CD4-positive, alpha-beta memory T cell (primary cell): ENCODE measurements at regions of chr7 and their contacts with region 1.

Region 1: DNA sequence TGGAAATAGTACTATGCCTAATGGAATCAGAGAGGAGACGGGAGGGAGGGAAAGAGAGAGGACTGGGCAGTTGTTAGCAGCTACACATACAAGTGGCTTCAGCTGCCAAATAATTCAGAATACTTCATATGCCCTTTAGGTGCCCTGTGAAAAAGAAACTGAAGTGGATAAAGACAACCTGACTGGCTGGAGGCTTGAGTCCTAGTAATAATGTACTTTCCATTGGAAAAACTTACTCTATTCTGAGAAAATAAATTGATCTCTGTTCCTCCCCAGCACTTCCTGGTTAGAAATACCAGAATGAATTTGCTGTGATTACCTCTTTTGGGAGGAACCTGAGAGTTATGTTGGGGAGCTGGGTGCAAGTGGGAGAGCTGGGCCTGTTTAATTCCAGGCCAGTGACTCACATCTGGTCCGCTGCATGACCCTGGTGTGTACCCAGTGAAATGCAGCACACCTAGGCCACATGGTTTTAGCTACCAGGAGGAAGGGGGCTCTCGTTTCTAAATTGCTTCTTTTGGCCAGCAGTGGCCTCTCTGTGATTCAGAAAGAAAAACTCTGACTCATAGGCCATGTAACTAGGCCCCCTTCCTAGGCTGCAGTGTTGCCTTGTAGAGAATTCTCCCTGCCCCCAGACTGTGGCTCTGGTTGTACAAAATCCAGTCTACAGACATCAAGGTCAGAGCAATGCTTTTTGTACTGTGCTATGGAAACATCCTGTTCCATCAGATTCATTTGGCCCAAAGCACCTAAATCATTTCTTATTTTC is 6.5 kb downstream of the AGFG2 start:
- DNase-seq: peak in 1 of 5 donors; percentile 84
- H3K4me3 ChIP-seq: peak overlapping the region; percentile 25 to 29
- H3K4me3 Mint-ChIP-seq: peak overlapping the region; percentile 69 to 97 (median 88)
- H3K27ac ChIP-seq: peak overlapping the region; percentile 66
- H3K27ac Mint-ChIP-seq: peak overlapping the region; percentile 61 to 98 (median 91)
- H3K4me1 ChIP-seq: peaks cover 99% of the 10 kb centered on the region
- H3K4me1 Mint-ChIP-seq: peaks cover 76 to 100% (median 89%) of the 10 kb centered on the region in 4 donors
- H3K27me3 ChIP-seq: no peaks in the 10 kb centered on the region
- H3K27me3 Mint-ChIP-seq: no peaks in the 10 kb centered on the region

Region 2: DNA sequence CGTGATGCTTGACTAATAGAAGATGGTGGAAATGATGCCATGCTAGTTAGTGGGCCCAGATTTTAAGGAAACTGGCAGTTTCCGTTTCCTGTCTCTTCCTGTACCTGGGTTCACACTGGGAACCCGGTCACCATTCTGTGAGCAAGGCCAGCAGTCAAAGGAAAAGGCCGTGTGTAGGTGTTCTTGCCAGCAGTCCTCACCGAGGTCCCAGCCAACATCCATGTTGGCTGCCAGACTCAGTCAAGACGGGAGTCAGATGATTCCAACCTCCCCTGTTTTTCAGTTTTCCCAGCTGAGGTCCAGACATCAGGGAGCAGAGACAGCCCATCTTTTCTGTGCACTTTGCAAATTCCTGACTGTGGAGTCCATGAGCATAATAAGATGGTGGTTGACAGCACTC is 202.8 kb before region 1 on chr7:
- CTCF ChIA-PET with region 1: no interaction called
- POLR2A ChIA-PET with region 1: no interaction called
- intact Hi-C with region 1: no loop called
- DNase-seq: no peak
- H3K4me3 ChIP-seq: no peak overlapping the region
- H3K4me3 Mint-ChIP-seq: peak overlapping the region in 1 of 8 donors; percentile 43
- H3K27ac ChIP-seq: no peak overlapping the region
- H3K27ac Mint-ChIP-seq: peak overlapping the region; percentile 83 to 92 (median 87)
- H3K4me1 ChIP-seq: peaks cover 21% of the 10 kb centered on the region
- H3K4me1 Mint-ChIP-seq: peaks cover 14 to 34% (median 19%) of the 10 kb centered on the region in 4 donors
- H3K27me3 ChIP-seq: no peaks in the 10 kb centered on the region
- H3K27me3 Mint-ChIP-seq: no peaks in the 10 kb centered on the region

Region 3: DNA sequence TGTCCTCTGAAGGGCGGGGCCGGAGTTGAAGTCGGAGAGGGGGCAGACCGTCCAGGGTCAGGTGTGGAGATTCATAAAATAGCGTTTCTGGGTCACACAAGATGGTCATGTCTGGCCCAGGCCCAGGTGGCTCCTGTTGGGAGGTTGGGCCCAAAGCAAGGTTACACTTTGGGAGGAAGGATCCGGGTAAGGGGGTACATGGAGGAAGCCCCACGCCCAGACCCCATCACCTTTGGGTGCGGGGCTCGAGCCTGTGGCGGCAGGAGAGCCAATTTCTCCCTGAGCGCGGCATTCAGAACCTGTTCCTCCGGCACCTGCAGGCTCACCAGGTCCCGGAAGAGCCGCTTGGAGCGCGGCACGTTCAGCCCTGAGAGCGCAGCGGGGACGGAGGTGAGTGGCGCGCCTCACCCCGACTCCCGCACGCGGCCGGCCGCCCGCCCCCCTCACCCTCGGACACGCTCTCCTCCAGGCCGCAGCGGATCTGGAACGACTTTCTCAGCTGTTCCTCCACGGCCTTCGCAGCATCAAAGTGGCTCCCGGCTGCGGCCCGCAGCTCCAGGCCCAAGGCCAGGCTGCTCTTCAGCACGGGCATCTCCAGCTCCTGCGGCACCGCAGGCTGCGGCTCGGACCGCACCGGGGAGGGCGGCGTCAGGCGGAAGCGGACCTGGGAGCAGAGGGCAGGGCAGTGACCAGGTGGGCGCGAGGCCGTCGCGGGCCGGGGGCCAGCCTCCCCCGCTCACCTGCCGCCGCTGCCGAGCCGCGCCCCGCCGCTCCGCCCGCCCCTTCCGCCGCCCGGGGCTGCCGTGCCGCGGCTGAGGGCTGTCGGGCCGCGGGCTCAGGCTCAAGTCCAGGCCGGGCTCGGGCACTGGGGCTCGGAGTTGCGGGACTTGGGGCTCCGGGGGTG is 109.9 kb before region 1 on chr7:
- CTCF ChIA-PET with region 1: interaction called, 3 read pairs
- POLR2A ChIA-PET with region 1: interaction called, 22 read pairs
- intact Hi-C with region 1: no loop called
- DNase-seq: peak; percentile 46 to 58 (median 53)
- H3K4me3 ChIP-seq: peak overlapping the region; percentile 78 to 95
- H3K4me3 Mint-ChIP-seq: peak overlapping the region; percentile 85 to 95 (median 92)
- H3K27ac ChIP-seq: peak overlapping the region; percentile 92
- H3K27ac Mint-ChIP-seq: peak overlapping the region; percentile 81 to 99 (median 94)
- H3K4me1 ChIP-seq: peaks cover 49% of the 10 kb centered on the region
- H3K4me1 Mint-ChIP-seq: peaks cover 24 to 55% (median 40%) of the 10 kb centered on the region in 4 donors
- H3K27me3 ChIP-seq: no peaks in the 10 kb centered on the region
- H3K27me3 Mint-ChIP-seq: no peaks in the 10 kb centered on the region

Region 4: DNA sequence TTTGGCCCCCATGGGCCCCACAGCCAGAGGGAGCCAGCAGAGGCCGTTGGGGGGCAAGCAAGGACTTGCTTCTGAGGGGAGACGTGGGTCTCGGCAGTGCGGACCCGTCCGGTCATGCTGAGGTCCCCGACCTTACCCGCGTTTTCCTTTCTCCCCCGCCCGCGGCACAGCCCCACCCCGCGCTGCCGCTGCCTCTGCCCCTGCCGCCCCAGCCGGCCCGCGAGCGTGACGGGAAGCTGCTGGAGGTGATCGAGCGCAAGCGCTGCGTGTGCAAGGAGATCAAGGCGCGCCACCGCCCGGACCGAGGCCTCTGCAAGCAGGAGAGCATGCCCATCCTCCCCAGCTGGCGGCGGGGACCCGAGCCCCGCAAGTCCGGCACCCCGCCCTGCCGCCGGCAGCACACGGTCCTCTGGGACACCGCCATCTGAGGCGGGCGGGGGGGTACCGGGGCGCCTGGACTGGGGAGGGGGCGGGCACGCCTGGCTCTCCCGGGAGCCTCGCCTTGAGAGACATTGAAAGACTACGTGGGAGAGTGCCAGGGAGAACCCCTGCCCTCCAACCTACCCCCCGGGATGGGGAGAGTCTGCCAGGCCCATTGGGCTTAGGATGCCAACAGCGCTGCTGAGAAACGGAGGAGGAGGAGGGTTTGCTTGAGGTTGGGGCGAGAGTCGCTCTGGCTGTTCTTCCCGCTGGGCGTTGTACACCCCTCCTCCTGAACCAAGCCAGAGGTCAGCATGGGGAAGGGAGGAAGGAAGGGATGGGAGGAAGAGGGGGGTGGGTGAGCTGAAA is 51.9 kb before region 1 on chr7:
- CTCF ChIA-PET with region 1: interaction called, 14 read pairs
- POLR2A ChIA-PET with region 1: interaction called, 9 read pairs
- intact Hi-C with region 1: no loop called
- DNase-seq: peak; percentile 48 to 60 (median 54)
- H3K4me3 ChIP-seq: no peak overlapping the region
- H3K4me3 Mint-ChIP-seq: peak overlapping the region; percentile 71 to 84 (median 75)
- H3K27ac ChIP-seq: no peak overlapping the region
- H3K27ac Mint-ChIP-seq: peak overlapping the region in 3 of 7 donors; percentile 32 to 86 (median 84)
- H3K4me1 ChIP-seq: peaks cover 10% of the 10 kb centered on the region
- H3K4me1 Mint-ChIP-seq: peaks cover 3 to 29% (median 15%) of the 10 kb centered on the region in 4 donors
- H3K27me3 ChIP-seq: no peaks in the 10 kb centered on the region
- H3K27me3 Mint-ChIP-seq: peaks cover 0 to 2% of the 10 kb centered on the region in 2 donors

Region 5: DNA sequence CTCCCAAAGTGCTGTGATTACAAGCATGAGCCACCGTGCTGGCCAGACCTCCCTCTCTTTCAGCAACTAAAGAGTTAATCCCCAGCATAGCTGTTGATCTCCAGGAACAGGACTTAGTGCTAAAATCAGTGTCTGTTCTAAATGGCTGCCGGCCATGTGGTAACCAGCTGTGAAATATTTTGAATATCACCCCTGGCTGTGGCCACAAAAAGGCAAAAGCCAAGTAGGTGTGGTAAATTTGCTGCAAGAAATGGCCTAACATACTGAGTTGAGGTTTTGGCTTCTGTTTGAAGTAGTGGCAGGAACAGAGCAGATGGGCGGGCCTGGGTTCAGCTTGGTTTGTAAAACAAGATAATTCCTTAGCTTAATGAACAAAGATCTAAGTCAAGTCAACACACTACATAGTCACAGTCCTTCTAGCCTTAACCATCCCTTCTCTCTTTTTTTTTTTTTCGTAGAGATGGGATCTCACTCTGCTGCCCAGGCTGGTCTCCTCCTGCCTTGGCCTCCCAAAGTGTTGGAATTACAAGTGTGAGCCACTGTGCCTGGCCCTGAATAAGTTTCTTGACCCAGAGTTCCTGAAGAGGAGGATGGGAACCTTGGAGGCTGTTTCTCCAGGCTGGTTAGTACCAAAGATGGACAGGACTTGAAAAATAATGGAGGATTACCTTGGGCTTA is 29.3 kb before region 1 on chr7:
- CTCF ChIA-PET with region 1: interaction called, 14 read pairs
- POLR2A ChIA-PET with region 1: interaction called, 26 read pairs
- intact Hi-C with region 1: no loop called
- DNase-seq: peak; percentile 74 to 82 (median 80)
- H3K4me3 ChIP-seq: peak overlapping the region in 1 of 2 donors; percentile 33
- H3K4me3 Mint-ChIP-seq: peak overlapping the region; percentile 61 to 83 (median 78)
- H3K27ac ChIP-seq: peak overlapping the region; percentile 24
- H3K27ac Mint-ChIP-seq: peak overlapping the region; percentile 72 to 89 (median 82)
- H3K4me1 ChIP-seq: peaks cover 30% of the 10 kb centered on the region
- H3K4me1 Mint-ChIP-seq: peaks cover 21 to 47% (median 28%) of the 10 kb centered on the region in 4 donors
- H3K27me3 ChIP-seq: no peaks in the 10 kb centered on the region
- H3K27me3 Mint-ChIP-seq: no peaks in the 10 kb centered on the region

Region 6: GRCh38 chr7:100568896-100569844 is 23.6 kb after region 1 on chr7:
- CTCF ChIA-PET with region 1: interaction called, 254 read pairs
- POLR2A ChIA-PET with region 1: interaction called, 10 read pairs
- intact Hi-C with region 1: no loop called
- DNase-seq: peak; percentile 43 to 70 (median 46)
- H3K4me3 ChIP-seq: peak overlapping the region in 1 of 2 donors; percentile 47
- H3K4me3 Mint-ChIP-seq: peak overlapping the region; percentile 31 to 77 (median 68)
- H3K27ac ChIP-seq: peak overlapping the region; percentile 48
- H3K27ac Mint-ChIP-seq: peak overlapping the region; percentile 32 to 93 (median 83)
- H3K4me1 ChIP-seq: peaks cover 40% of the 10 kb centered on the region
- H3K4me1 Mint-ChIP-seq: peaks cover 14 to 52% (median 27%) of the 10 kb centered on the region in 4 donors
- H3K27me3 ChIP-seq: no peaks in the 10 kb centered on the region
- H3K27me3 Mint-ChIP-seq: no peaks in the 10 kb centered on the region